ENCODE measurements at regions of chr1 and their contacts with region 1.

Region 1: DNA sequence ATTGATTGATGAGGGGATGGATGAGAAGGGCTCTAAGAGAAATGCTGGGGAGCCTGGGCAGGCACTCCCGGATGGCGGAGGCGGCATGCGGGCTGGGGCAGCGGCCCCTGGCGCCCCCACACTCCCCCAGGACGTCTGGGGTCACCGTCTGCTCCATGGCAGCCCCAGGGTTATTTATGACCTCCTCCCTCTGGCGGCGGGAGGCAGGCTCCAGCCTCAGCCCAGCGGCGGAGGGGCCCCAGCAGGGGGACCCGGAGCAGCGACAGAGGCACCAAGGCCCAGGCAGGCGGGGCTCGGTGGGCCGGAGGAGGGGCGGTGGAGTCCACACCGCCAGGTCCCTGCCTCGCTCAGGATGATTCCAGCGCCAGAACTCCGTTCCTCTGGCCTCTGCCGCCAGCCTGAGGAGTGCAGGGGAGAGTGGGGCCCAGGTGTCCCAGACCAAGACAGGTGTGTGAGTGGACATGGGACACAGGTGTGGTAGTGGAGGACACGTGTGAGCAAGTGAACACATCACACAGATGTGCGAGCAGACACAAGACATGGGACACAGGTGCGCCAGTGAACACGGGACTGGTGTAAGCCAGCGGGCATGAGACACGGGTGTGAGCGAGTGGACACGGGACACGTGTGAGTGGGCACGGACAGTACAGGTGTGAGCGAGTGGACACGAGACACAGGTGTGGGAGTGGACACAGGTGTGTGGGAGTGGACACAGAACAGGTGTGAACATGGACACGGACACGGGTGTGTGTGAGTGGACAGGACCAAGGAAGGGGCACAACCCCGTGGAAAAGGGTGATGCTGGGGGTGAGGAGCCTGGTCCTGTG is 2.5 kb upstream of the SAMD11 start:
- DNase-seq: peak; percentile 65 to 69
- ATAC-seq: peak; percentile 63 to 83 (median 74)
- H3K4me3 ChIP-seq: peak overlapping the region in 2 of 10 donors; percentile 2 to 3
- H3K27ac ChIP-seq: no peak overlapping the region
- H3K4me1 ChIP-seq: peaks cover 19 to 50% (median 32%) of the 10 kb centered on the region in 9 donors
- H3K27me3 ChIP-seq: peaks cover 17 to 100% (median 88%) of the 10 kb centered on the region in 7 donors
- CTCF ChIP-seq: peak; percentile 26 to 76 (median 58)

Region 2: DNA sequence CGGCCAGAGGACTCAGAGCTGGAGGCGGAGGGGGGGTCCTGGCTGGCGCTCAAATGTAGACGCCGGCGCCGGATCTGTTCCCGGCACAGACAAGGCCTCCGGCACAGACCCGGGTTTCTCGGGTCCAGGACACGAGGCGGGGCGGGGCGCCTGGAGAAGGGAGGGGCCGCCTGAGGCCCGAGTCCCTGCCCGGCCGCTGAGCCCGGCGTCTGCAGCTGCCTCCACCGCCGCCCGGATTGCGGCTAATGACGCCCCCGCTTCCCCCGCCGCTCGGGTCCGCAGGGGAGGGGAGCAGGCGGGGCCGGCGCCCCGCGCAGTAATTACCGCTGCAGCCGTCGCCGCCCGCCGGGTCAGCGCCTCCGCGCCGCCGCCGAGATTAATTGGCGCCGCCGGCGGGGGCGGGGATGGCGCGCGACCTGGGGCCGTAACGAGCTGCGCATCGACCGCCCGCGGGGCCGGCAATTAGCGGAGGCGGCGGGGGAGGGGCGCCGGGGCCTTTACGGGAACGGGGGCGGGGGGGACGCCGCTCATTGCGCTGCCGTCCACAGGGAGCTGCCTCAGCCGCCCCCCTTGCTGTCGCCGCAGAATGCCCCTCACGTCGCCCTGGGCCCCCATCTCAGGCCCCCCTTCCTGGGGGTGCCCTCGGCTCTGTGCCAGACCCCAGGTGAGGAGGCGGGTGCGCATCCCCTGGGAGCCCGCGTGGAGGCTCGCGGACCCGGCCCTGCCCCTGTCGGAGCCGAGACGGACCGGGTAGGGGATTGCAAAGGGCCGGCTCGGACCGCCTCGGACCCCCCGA is 20.6 kb after region 1 on chr1:
- intact Hi-C with region 1: loop called in 1 of 10 experiments (anchors 2 kb)
- DNase-seq: peak; percentile 67 to 71
- ATAC-seq: peak in 7 of 8 donors; percentile 25 to 51 (median 45)
- H3K4me3 ChIP-seq: peak overlapping the region; percentile 4 to 51 (median 46)
- H3K27ac ChIP-seq: peak overlapping the region in 7 of 10 donors; percentile 45 to 87 (median 69)
- H3K4me1 ChIP-seq: peaks cover 3 to 55% (median 33%) of the 10 kb centered on the region in 9 donors
- H3K27me3 ChIP-seq: peaks cover 11 to 69% (median 58%) of the 10 kb centered on the region in 7 donors
- CTCF ChIP-seq: no peak